ENCODE measurements at regions of chr4 and their contacts with region 1.

Region 1: GRCh38 chr4:130524057-130524456 is 1428.1 kb downstream of the C4orf33 start:
- DNase-seq: no peak
- H3K4me3 ChIP-seq: no peak overlapping the region
- H3K27ac ChIP-seq: no peak overlapping the region
- H3K4me1 ChIP-seq: no peaks in the 10 kb centered on the region
- H3K27me3 ChIP-seq: no peaks in the 10 kb centered on the region
- CTCF ChIP-seq: no peak

Region 2: DNA sequence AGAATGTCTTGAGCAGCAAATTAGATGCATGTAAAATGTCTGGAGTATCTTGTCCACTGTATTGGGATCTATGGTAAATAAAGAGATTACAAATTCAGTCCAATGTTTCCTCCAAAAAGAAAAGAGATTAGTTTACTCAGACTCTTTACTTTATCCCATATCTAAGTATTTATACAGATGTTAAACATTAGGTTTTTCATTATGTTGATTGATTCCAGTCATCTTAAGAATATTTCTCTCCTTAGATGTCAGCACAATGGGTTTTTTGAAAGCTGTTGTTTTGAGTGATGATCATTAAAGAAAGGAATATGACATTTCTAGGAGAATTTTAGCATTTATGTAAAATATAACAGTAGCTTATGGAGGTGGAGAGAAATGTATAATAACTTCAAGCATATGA is 489.2 kb before region 1 on chr4:
- intact Hi-C with region 1: loop called (anchors 5 kb)
- DNase-seq: no peak
- H3K4me3 ChIP-seq: no peak overlapping the region
- H3K27ac ChIP-seq: no peak overlapping the region
- H3K4me1 ChIP-seq: no peaks in the 10 kb centered on the region
- H3K27me3 ChIP-seq: no peaks in the 10 kb centered on the region
- CTCF ChIP-seq: no peak

Region 3: DNA sequence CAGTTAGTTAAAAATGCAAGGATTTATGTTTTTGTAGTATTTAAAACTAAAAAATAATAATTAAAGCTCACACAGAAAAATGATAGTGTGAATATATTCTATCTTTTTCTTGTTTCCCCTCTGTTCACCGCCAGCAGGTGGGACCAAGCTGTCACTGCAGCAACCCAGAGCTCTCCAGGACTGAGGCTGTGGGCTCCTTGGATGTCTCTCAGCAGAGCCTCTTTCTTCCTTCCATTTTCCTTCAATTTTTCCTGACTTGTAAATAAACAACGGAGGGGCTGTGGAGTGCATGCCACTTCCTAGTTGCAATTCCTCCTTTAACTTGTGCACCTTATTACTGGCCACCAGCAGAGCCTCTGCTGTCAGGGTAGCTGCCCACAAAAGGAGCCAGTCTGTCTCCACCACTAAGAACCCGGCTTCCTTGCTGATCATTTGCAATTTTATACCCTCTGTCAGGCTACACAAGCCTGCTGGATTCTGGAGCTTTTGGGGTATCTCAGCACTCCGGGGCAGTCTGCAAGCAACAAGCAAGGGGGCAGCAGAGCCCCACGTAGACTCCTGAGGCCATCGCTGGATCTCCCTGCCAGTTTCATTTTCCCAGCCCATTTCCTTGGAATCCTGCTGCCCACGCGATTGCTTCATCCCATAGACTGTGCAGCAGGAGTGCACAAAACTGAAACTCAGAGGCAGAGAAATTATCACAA is 39.3 kb after region 1 on chr4:
- intact Hi-C with region 1: no loop called
- DNase-seq: peak in 1 of 2 donors; percentile 65
- H3K4me3 ChIP-seq: peak overlapping the region; percentile 31 to 42
- H3K27ac ChIP-seq: no peak overlapping the region
- H3K4me1 ChIP-seq: peaks cover 0 to 8% (median 3%) of the 10 kb centered on the region in 4 donors
- H3K27me3 ChIP-seq: no peaks in the 10 kb centered on the region
- CTCF ChIP-seq: peak in 1 of 2 experiments; percentile 36

Region 4: DNA sequence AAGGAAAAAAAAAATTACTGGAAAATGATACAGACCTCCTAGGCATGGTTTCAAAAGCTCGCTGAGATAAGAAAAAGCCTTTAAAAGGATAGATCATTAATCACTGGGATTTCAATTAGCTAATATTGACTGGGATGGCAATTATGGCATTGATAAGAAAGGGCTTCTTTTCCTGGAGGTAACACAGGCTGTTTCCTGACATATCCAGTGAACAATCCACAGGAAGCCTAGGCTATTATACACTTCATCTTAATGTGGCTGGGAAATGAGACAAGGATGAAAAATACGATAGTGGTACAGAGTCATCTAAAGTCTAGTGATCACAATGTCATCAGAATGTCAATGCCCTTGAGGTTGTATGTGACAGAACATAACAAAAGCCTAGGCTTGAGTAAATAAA is 151.2 kb after region 1 on chr4:
- intact Hi-C with region 1: no loop called
- DNase-seq: no peak
- H3K4me3 ChIP-seq: no peak overlapping the region
- H3K27ac ChIP-seq: no peak overlapping the region
- H3K4me1 ChIP-seq: no peaks in the 10 kb centered on the region
- H3K27me3 ChIP-seq: no peaks in the 10 kb centered on the region
- CTCF ChIP-seq: no peak

Measured in tibial artery (tissue), 4 donors.